ENCODE measurements at regions of chr17 and their contacts with region 1.

Region 1: DNA sequence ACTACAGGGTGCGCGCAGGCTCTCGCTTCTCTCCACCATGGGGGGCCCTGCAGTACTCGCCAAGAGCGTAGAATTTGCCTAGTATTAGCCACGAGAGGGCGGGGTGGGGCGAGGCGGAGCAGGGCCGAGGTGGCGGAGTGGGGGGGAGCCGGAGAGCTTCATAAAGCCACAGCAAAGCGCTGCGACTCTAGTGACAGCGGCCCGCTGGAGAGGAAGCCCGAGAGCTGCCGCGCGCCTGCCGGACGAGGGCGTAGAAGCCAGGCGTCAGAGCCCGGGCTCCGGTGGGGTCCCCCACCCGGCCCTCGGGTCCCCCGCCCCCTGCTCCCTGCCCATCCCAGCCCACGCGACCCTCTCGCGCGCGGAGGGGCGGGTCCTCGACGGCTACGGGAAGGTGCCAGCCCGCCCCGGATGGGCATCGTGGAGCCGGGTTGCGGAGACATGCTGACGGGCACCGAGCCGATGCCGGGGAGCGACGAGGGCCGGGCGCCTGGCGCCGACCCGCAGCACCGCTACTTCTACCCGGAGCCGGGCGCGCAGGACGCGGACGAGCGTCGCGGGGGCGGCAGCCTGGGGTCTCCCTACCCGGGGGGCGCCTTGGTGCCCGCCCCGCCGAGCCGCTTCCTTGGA is at the start of gene TBX21:
- DNase-seq: peak; percentile 70
- ATAC-seq: peak; percentile 84 to 91
- total RNA-seq, gene TBX21: 0.34 to 0.80 TPM

Region 2: GRCh38 chr17:46783031-46783593 is 950.0 kb before region 1 on chr17:
- intact Hi-C with region 1: no loop called
- DNase-seq: no peak
- ATAC-seq: no peak

Region 3: DNA sequence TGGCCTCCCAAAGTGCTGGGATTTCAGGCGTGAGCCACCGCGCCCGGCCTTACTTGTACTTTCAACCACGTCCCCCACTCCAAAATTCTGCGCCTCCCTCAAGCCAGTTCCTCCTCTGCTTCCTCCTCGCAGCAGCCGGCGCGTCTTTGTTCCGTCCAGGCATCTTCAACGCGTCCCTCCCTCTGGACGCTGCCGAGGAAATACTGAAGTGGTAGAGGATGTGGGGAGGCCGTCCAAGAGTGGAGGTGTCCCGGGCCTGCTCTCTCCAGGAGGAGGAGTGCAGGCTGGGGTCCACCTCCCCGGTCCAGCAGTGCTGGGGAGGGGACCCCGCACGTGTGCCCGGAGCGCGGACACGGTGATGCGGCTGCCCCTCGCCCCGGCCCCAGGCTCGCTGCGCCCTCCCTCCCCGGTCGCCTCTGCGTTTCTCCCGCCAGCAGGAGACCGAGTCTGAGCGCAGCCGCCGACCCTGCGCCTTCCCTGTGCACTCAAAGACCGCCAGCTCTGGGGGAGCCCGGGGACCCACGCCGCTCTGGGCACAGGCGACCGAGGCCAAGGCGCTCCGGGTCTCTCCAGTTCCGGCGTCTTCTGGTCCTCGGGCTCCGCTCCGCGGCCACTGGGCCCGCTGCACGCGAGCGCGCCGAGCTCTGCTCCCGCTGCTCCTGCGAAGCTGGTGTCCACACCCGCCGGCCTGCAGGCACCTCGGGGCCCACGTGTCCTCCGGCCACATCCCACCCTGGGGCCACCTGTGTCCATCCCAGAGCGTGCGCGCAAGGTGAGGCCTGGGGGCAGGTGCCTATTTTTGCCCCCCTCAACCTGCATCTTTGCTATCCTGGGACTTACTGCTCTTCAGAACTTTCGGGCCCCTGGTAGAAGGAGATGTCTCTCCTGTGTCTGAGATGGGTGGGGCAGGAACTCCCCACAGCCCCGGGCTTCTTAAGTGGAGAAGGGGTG is 56.7 kb after region 1 on chr17:
- intact Hi-C with region 1: loop called in 1 of 2 experiments (anchors 10 kb)
- DNase-seq: peak; percentile 55
- ATAC-seq: peak; percentile 94 to 95

Measured in left cardiac atrium (tissue), 4 donors.